Panc1 (cell line): ENCODE measurements at regions of chr21 and their contacts with region 1.

Region 1: DNA sequence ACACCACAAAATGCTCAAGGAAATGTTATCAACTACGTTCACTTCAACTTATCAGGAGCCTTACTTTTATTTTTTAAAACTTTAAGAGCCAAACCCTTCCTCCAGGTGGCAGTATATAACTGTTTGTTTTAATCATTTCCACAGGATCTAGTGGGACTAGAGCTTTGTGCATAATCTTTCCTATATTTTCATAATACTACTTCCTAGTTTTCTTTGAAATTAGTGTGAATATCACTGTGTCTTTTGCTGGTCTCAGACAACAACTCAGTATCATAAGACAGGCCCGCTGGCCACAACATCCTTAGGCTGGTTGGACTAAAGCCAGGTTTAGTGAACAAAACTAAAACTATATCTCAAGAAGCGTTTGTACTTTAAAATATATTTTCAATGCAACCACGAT is 145.5 kb downstream of the TIAM1 start:
- DNase-seq: peak; percentile 33
- ATAC-seq: no peak; the same call in 1 of the 2 replicates
- H3K4me3 ChIP-seq: no peak overlapping the region
- H3K27ac ChIP-seq: no peak overlapping the region
- H3K4me1 ChIP-seq: no peaks in the 10 kb centered on the region
- H3K27me3 ChIP-seq: no peaks in the 10 kb centered on the region
- CTCF ChIP-seq: peak; percentile 51; the same call in 1 of the 2 replicates

Region 2: GRCh38 chr21:31335957-31336738 is 137.6 kb after region 1 on chr21:
- CTCF ChIA-PET with region 1: no interaction called
- POLR2A ChIA-PET with region 1: no interaction called
- in situ Hi-C with region 1: no loop called
- intact Hi-C with region 1: loop called (anchors 10 kb)
- DNase-seq: no peak
- ATAC-seq: no peak
- H3K4me3 ChIP-seq: no peak overlapping the region
- H3K27ac ChIP-seq: no peak overlapping the region
- H3K4me1 ChIP-seq: no peaks in the 10 kb centered on the region
- H3K27me3 ChIP-seq: no peaks in the 10 kb centered on the region
- CTCF ChIP-seq: no peak

Region 3: DNA sequence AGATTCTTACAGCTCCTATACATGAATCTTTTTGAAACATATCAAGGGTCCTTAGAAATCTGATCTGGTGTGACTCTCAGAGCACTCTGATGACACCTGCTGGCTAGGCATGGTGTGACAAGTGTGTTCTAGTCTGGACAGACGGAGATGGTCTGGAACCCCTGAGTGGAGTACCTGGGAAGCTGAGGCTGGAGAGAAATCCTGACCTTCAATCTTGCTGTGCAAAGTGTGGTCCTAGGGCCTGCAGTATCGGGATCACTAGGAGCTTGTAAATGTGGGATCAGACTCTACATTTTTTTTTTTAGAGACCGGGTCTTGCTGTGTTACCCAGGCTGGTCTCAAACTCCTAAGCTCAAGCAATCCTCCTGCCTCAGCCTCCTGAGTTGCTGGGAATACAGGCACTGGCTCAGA is 382.3 kb after region 1 on chr21:
- CTCF ChIA-PET with region 1: interaction called, 7 read pairs
- POLR2A ChIA-PET with region 1: no interaction called
- in situ Hi-C with region 1: no loop called
- intact Hi-C with region 1: loop called (anchors 1 kb)
- DNase-seq: peak; percentile 50
- ATAC-seq: peak; percentile 85
- H3K4me3 ChIP-seq: no peak overlapping the region
- H3K27ac ChIP-seq: no peak overlapping the region
- H3K4me1 ChIP-seq: no peaks in the 10 kb centered on the region
- H3K27me3 ChIP-seq: no peaks in the 10 kb centered on the region
- CTCF ChIP-seq: peak; percentile 80

Region 4: DNA sequence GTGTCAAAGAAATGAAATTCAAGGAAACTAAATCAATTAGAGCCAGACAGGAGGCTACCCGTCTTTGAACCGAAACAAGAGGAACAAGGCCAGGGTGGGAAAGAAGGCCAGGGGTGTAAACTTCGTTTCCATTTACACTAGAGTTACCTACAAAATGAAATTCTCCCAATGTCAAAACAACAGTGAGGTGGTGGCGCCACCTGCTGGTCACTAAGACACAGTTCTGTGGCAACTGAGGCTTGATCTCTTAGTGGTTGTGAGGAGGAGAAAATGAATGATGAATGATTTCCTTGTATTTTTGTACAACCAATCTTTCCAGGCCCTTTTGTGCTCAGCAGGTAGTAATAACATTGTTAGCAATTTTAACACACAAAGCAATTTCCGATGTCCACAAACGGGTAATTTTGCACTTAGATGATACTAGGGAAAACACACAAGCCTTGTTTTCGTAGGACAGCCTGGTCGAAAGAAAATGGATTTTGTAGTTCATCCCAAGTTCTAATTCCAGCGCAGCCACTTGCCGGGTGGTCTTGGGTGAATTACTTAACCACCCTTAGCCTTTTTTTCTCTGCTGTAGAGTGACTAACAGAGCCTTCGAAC is 406.1 kb after region 1 on chr21:
- CTCF ChIA-PET with region 1: no interaction called
- POLR2A ChIA-PET with region 1: no interaction called
- in situ Hi-C with region 1: no loop called
- intact Hi-C with region 1: loop called (anchors 1 kb)
- DNase-seq: peak; percentile 22
- ATAC-seq: peak; percentile 82
- H3K4me3 ChIP-seq: no peak overlapping the region
- H3K27ac ChIP-seq: no peak overlapping the region
- H3K4me1 ChIP-seq: no peaks in the 10 kb centered on the region
- H3K27me3 ChIP-seq: no peaks in the 10 kb centered on the region
- CTCF ChIP-seq: peak; percentile 84